Activated CD8-positive, alpha-beta T cell treated with anti-CD3 and anti-CD28 coated beads, Interleukin-2, amount 10 ng/mL, durations not matched to agents 7 days and 5 days (primary cell): ENCODE measurements at regions of chr17 and their contacts with region 1.

Region 1: GRCh38 chr17:49327835-49328784 is 33.9 kb downstream of the ZNF652 start:
- DNase-seq: no peak
- ATAC-seq: no peak
- H3K4me3 Mint-ChIP-seq: no peak overlapping the region
- H3K27ac Mint-ChIP-seq: peak overlapping the region; percentile 30
- H3K4me1 Mint-ChIP-seq: peaks cover 40% of the 10 kb centered on the region
- H3K27me3 Mint-ChIP-seq: no peaks in the 10 kb centered on the region

Region 2: GRCh38 chr17:49239963-49240362 is 88.1 kb before region 1 on chr17:
- CTCF ChIA-PET with region 1: no interaction called
- POLR2A ChIA-PET with region 1: no interaction called
- DNase-seq: no peak
- ATAC-seq: no peak
- H3K4me3 Mint-ChIP-seq: no peak overlapping the region
- H3K27ac Mint-ChIP-seq: no peak overlapping the region
- H3K4me1 Mint-ChIP-seq: no peaks in the 10 kb centered on the region
- H3K27me3 Mint-ChIP-seq: peaks cover 7% of the 10 kb centered on the region

Region 3: DNA sequence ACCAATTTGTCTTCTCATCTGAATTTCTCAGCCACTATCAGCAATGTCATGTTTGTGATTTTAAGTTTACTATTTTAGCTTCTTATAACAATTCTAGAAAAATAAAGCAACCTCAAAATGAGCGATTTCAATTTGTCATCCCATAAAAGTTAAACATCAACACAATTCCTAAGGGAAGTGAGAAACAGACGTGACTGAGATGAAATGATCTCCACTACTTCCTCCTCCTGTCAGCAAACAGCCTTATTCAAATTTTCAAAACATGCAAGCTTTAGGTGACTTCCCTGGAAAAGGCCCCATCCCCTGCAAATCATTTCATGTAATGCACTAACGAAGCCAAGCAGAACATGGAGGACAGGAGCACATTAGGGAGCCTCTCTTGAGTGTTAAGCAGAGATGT is 31.0 kb before region 1 on chr17:
- CTCF ChIA-PET with region 1: no interaction called
- POLR2A ChIA-PET with region 1: no interaction called
- DNase-seq: no peak
- ATAC-seq: no peak
- H3K4me3 Mint-ChIP-seq: no peak overlapping the region
- H3K27ac Mint-ChIP-seq: no peak overlapping the region
- H3K4me1 Mint-ChIP-seq: peaks cover 3% of the 10 kb centered on the region
- H3K27me3 Mint-ChIP-seq: no peaks in the 10 kb centered on the region

Region 4: GRCh38 chr17:49343273-49343672 is 15.2 kb after region 1 on chr17:
- CTCF ChIA-PET with region 1: interaction called, 10 read pairs
- POLR2A ChIA-PET with region 1: interaction called, 5 read pairs
- DNase-seq: no peak
- ATAC-seq: peak; percentile 50
- H3K4me3 Mint-ChIP-seq: peak overlapping the region; percentile 72
- H3K27ac Mint-ChIP-seq: peak overlapping the region; percentile 71
- H3K4me1 Mint-ChIP-seq: peaks cover 71% of the 10 kb centered on the region
- H3K27me3 Mint-ChIP-seq: no peaks in the 10 kb centered on the region

Region 5: DNA sequence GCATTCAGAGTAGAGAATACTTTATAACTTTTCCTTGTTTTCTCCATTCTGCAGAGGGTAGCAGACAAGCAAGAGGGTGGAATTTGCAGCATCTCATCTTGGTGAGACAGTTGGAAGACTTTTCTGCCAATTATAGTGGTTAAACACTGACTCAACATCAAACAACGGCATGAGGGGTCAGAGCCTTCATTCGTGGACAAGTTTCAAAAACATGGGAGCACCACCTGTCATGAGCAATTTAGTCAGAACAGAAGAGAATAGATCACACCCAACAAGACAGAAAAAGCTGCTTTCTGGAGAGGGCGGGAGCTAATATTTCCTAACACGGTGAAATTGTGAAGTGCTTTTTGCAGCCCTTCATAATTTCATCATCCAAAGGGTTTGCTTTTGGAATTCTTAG is 51.8 kb after region 1 on chr17:
- CTCF ChIA-PET with region 1: no interaction called
- POLR2A ChIA-PET with region 1: no interaction called
- DNase-seq: no peak
- ATAC-seq: no peak
- H3K4me3 Mint-ChIP-seq: no peak overlapping the region
- H3K27ac Mint-ChIP-seq: no peak overlapping the region
- H3K4me1 Mint-ChIP-seq: peaks cover 2% of the 10 kb centered on the region
- H3K27me3 Mint-ChIP-seq: no peaks in the 10 kb centered on the region